ENCODE measurements at regions of chr5 and their contacts with region 1.

Region 1: DNA sequence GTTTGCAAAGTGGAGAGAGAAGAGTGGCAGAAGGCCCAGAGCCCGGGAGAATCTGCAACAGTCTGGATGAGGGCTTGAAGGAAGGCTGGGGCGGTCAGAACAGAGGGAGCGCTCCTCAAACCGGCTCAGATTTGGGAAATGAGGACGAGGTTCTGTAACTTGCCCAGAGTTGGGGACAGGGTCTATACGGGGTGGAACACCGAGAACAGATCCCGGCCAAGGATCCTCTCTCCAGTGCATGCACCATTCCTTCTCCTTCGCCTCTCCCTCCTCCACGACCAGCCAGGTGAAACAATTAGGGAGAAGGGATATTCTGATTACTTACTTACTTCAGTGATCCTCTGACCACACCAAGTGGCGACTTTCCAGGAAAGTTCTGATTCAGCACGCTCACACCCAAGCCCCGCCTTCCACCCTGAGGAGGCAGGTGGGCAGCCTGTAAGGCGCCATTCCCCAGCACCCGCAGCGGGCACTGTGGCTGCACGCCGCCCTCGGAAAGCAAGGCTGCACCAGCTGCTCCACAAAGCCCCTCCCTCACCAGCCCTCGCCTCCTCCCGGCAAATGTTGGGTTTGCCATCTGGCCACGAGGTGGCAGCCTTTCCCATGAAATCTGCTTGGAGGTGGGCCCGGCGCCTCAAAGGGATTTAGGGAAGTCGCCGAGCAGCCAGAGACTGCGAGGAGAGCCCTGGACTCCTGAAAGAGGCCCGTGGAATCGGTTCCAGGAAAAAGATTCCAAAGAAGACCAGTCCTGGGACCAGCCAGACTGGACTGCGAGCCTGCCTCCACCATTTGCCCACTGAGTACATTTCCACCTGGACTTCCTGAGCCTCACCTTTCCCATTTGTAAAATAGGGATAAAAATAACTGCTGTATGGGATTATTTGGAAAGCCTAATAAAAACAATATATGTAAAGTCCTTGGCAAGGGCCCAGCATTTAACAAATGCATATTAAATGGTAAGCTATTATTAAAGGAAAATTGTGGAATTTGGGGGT is 22.2 kb upstream of the WWC1 start:
- DNase-seq: peak; percentile 11 to 74 (median 40)
- ATAC-seq: peak; percentile 85
- H3K4me3 ChIP-seq: no peak overlapping the region
- H3K4me3 Mint-ChIP-seq: peak overlapping the region in 9 of 10 donors; percentile 34 to 82 (median 55)
- H3K27ac ChIP-seq: no peak overlapping the region
- H3K27ac Mint-ChIP-seq: no peak overlapping the region
- H3K4me1 ChIP-seq: peaks cover 0 to 7% of the 10 kb centered on the region in 2 donors
- H3K4me1 Mint-ChIP-seq: peaks cover 6 to 15% (median 10%) of the 10 kb centered on the region in 7 donors
- H3K27me3 ChIP-seq: no peaks in the 10 kb centered on the region
- H3K27me3 Mint-ChIP-seq: peaks cover 0 to 21% (median 15%) of the 10 kb centered on the region in 5 donors

Region 2: GRCh38 chr5:168165221-168165965 is 103.9 kb before region 1 on chr5:
- CTCF ChIA-PET with region 1: no interaction called
- POLR2A ChIA-PET with region 1: no interaction called
- intact Hi-C with region 1: no loop called
- DNase-seq: no peak
- ATAC-seq: no peak
- H3K4me3 ChIP-seq: no peak overlapping the region
- H3K4me3 Mint-ChIP-seq: peak overlapping the region in 2 of 10 donors; percentile 8 to 13
- H3K27ac ChIP-seq: no peak overlapping the region
- H3K27ac Mint-ChIP-seq: no peak overlapping the region
- H3K4me1 ChIP-seq: no peaks in the 10 kb centered on the region
- H3K4me1 Mint-ChIP-seq: peaks cover 0 to 20% (median 8%) of the 10 kb centered on the region in 7 donors
- H3K27me3 ChIP-seq: no peaks in the 10 kb centered on the region
- H3K27me3 Mint-ChIP-seq: peaks cover 0 to 17% (median 0%) of the 10 kb centered on the region in 5 donors

Region 3: DNA sequence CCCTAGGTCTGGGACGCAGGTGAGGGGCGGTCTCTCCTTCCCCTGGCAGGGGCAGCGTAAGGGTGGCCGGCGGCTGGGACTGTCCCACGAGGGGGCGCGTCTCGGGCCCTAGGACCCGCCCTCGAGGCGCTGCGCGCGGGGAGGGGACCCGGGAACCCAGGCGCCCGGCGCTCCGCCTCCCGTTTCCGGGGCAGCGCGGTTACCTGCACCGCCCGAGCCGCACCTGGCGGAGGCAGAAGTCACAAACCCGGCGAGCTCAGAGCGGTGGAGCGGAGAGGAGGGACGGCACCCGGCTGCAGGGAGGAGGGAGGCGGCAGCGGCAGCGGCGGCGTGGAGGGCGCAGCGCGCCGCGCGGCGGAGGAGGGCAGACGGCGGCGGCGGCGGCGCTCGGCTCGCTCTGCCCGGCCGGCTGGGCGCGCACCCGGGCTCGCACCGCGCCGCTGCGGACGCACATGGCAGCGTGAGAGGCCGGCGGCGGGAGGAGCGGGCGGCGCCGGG is 22.3 kb after region 1 on chr5 and contains the start of gene WWC1:
- CTCF ChIA-PET with region 1: interaction called, 3 read pairs
- POLR2A ChIA-PET with region 1: no interaction called
- intact Hi-C with region 1: loop called in 1 of 2 experiments (anchors 2 kb)
- DNase-seq: peak in 8 of 9 donors; percentile 15 to 67 (median 55)
- ATAC-seq: peak; percentile 95
- H3K4me3 ChIP-seq: no peak within 1 kb of the TSS
- H3K4me3 Mint-ChIP-seq: peak within 1 kb of the TSS in 9 of 10 donors; percentile 35 to 82 (median 72)
- H3K27ac ChIP-seq: no peak within 1 kb of the TSS
- H3K27ac Mint-ChIP-seq: no peak within 1 kb of the TSS
- H3K4me1 ChIP-seq: no peaks in the 10 kb centered on the region
- H3K4me1 Mint-ChIP-seq: peaks cover 3 to 21% (median 17%) of the 10 kb centered on the region in 7 donors
- H3K27me3 ChIP-seq: peaks cover 0 to 6% of the 10 kb centered on the region in 2 donors
- H3K27me3 Mint-ChIP-seq: peaks cover 0 to 62% (median 45%) of the 10 kb centered on the region in 5 donors
- total RNA-seq, gene WWC1: 0.56 to 1.4 (median 0.86) TPM in 4 of 5 experiments, not detected in the other

Region 4: DNA sequence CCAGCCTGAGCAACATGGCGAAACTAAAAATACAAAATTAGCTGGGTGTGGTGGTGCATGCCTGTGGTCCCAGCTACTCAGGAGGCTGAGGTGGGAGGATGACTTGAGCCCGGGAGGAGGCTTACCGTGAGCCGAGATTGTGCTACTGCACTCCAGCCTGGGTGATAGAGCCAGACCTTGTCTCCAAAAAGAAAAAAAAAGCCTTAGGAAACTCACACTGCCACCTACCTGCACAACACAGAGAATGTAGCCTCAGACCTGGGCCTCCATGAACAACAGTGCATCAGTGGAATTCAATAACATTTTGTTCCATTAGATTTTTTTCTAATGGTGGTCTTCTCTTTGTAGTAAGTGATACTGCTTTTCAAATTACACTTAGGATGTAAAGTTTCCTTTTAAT is 153.2 kb after region 1 on chr5:
- CTCF ChIA-PET with region 1: no interaction called
- POLR2A ChIA-PET with region 1: no interaction called
- intact Hi-C with region 1: loop called (anchors 1 kb)
- DNase-seq: no peak
- ATAC-seq: no peak
- H3K4me3 ChIP-seq: no peak overlapping the region
- H3K4me3 Mint-ChIP-seq: no peak overlapping the region
- H3K27ac ChIP-seq: no peak overlapping the region
- H3K27ac Mint-ChIP-seq: no peak overlapping the region
- H3K4me1 ChIP-seq: no peaks in the 10 kb centered on the region
- H3K4me1 Mint-ChIP-seq: peaks cover 0 to 6% (median 0%) of the 10 kb centered on the region in 7 donors
- H3K27me3 ChIP-seq: no peaks in the 10 kb centered on the region
- H3K27me3 Mint-ChIP-seq: peaks cover 0 to 2% (median 0%) of the 10 kb centered on the region in 5 donors

Region 5: DNA sequence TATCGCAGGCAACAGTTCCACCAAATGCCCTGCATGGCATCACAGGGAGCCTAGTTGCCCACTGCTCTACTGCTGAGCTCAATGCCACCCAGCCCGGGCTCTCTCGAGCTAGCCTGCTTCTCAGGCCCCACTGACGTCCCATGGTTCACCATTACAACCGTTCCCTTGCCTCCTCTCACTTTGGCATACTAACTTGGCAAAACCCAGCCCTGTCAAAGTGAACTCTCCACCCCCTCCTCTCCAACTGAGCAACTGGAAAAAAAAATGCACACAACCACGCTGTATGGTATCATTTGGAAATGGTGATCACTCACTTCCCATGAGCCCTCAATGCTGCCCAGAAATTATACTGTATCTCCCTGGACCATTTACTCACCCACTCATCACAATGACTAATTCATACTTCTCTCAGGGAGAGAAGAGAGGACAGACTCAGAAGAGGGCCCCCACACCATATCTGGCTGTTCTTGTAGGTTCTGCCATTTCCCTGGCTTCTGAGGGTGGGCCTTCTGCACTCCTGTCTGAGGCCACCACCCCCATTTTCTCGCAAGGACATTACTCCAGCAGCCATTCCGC is 165.6 kb after region 1 on chr5:
- CTCF ChIA-PET with region 1: no interaction called
- POLR2A ChIA-PET with region 1: no interaction called
- intact Hi-C with region 1: loop called in 1 of 2 experiments (anchors 5 kb)
- DNase-seq: no peak
- ATAC-seq: no peak
- H3K4me3 ChIP-seq: no peak overlapping the region
- H3K4me3 Mint-ChIP-seq: no peak overlapping the region
- H3K27ac ChIP-seq: no peak overlapping the region
- H3K27ac Mint-ChIP-seq: no peak overlapping the region
- H3K4me1 ChIP-seq: no peaks in the 10 kb centered on the region
- H3K4me1 Mint-ChIP-seq: no peaks in the 10 kb centered on the region
- H3K27me3 ChIP-seq: no peaks in the 10 kb centered on the region
- H3K27me3 Mint-ChIP-seq: peaks cover 0 to 25% (median 0%) of the 10 kb centered on the region in 5 donors

Region 6: DNA sequence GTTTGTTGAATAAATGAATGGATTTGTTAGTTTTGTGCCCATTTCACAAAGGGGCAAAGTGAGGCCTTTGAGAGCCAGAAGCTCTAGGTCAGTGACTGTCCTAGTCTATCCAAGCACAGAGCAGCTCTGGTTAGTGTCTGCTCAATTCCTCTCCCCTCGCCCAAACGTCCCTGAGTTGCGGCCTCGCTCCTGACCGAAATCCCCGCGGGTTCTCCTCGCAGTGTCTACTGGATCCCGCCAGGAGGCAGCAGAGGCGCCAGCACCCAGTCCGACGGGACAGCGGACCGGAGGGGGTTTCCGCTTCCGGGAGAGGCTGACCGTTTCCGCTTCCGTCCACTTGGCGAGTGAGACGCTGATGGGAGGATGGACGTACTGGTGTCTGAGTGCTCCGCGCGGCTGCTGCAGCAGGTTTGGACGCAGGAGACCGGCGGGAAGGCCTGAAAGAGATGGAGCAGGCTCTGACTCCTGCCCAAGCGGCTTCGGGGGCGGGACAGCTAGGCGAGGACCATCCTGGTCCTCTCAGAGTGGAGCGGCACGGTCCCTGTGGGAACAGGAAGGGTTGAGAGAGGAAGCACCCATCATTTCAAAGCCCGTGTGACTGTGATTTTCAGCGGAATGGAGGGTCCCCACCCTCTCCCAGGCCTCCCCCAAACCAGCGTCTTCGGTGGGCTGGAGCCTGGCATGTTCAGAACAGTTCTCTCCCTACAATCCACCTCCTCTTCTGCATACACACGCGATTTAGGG is 217.1 kb after region 1 on chr5 and contains the start of gene RARS1:
- CTCF ChIA-PET with region 1: no interaction called
- POLR2A ChIA-PET with region 1: no interaction called
- intact Hi-C with region 1: loop called (anchors 1 kb)
- DNase-seq: peak; percentile 65 to 89 (median 76)
- ATAC-seq: peak; percentile 98
- H3K4me3 ChIP-seq: peak within 1 kb of the TSS; percentile 93
- H3K4me3 Mint-ChIP-seq: peak within 1 kb of the TSS; percentile 96 to 100 (median 99)
- H3K27ac ChIP-seq: peak within 1 kb of the TSS; percentile 73
- H3K27ac Mint-ChIP-seq: peak within 1 kb of the TSS; percentile 88 to 96 (median 92)
- H3K4me1 ChIP-seq: peaks cover 7% of the 10 kb centered on the region in 2 donors
- H3K4me1 Mint-ChIP-seq: peaks cover 30 to 52% (median 44%) of the 10 kb centered on the region in 7 donors
- H3K27me3 ChIP-seq: no peaks in the 10 kb centered on the region
- H3K27me3 Mint-ChIP-seq: peaks cover 0 to 3% (median 0%) of the 10 kb centered on the region in 5 donors
- total RNA-seq, gene RARS1: 59.1 to 110 (median 81.3) TPM

Region 7: DNA sequence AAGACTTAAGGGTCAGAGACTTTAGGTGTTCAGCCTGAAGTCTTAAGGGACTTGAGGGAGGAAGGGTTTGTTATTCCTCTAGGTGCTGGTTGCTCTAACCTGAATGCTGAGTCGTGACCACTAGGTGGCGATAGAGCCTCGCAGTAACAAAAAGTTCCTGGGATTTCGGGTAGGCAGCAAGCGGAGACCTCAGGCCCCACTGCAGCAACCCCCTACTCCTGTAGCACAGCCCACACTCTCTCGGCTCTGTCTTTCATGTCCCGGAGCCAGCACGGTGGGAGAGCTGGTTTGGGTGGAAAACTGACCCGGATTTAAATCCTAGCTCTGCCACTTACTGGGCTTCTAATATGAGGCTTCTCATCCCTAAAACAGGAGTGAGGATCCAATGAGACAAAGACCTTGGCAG is 410.3 kb after region 1 on chr5:
- CTCF ChIA-PET with region 1: no interaction called
- POLR2A ChIA-PET with region 1: no interaction called
- intact Hi-C with region 1: loop called in 1 of 2 experiments (anchors 1 kb)
- DNase-seq: peak; percentile 11 to 59 (median 47)
- ATAC-seq: peak; percentile 55
- H3K4me3 ChIP-seq: no peak overlapping the region
- H3K4me3 Mint-ChIP-seq: no peak overlapping the region
- H3K27ac ChIP-seq: no peak overlapping the region
- H3K27ac Mint-ChIP-seq: no peak overlapping the region
- H3K4me1 ChIP-seq: peaks cover 0 to 5% of the 10 kb centered on the region in 2 donors
- H3K4me1 Mint-ChIP-seq: peaks cover 6 to 20% (median 14%) of the 10 kb centered on the region in 7 donors
- H3K27me3 ChIP-seq: no peaks in the 10 kb centered on the region
- H3K27me3 Mint-ChIP-seq: peaks cover 0 to 6% (median 0%) of the 10 kb centered on the region in 5 donors

Measured in naive thymus-derived CD4-positive, alpha-beta T cell (primary cell).